ENCODE measurements at regions of chr12 and their contacts with region 1.

Region 1: DNA sequence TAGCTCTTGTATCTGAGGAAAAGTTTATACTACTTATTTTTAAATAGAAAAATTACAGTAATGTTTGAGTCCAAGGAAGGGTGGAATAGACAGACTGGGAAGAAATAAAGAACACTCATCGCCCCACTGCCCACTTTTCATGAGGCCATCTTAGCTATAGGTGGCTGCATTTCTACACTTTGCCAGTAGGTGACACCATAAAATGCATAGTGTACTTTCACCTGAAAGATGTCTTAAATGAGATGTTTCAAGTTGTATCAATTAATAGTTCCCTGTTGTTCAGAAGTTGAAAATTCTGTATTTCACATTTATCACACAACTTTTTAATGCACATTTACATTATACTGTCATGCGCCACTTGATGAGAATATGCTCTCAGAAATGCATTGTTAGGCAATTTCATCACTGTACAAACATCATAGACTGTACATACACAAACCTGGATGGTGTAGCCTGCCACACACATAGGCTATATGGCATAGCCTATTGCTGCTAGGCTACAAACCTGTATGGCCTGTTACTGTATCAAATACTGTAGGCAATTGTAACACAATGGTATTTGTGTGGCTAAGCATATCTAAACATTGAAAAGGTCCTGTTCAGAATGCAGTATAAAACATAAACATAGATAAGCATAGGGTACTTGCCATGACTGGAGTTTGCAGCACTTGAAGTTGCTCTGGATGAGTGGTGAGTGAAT is 27.6 kb downstream of the PMCH start:
- DNase-seq: no peak
- H3K4me3 Mint-ChIP-seq: no peak overlapping the region
- H3K27ac Mint-ChIP-seq: no peak overlapping the region
- H3K4me1 Mint-ChIP-seq: peaks cover 26% of the 10 kb centered on the region
- H3K27me3 Mint-ChIP-seq: no peaks in the 10 kb centered on the region

Region 2: DNA sequence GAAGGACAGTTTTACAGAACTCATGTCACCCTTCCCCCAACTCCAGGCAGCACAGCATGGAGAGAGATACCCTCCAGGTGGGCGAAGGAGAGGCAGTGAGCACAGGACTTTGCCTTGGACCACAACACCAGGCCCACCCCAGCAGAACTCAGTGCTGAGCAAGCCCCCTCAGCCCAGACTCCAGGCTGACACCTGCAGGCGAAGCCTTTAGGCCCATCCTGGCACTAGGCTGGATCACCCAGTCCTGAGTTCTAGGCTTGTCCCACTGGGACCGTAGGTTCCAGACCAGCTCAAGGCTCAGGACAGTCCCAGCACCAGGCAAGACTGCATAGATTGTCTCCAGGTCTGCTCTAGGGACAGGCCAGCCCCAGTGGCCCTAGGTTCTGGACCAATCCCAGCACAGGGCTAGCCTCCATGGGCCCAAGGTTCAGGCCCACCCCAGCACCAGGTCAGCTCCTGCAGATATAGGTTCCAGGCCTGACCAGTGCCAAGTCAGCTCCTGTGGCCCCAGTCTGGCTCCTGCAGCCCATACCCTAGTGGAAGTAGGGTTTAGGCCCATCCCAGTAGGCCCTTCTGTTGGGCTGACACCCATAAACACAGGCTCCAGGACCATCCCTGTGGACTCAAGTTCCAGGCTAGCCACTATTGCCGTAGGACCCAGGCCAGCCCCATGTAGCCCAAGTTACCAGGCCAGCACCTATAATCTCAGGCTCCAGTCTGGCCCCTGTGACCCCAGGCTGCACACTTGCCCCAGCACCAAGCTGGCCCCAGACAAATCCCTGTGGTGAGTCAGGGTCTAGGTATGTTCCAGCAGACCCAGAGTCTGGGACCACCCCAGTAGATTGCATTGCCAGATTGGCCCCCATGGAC is 117.6 kb before region 1 on chr12:
- intact Hi-C with region 1: no loop called
- DNase-seq: no peak
- H3K4me3 Mint-ChIP-seq: no peak overlapping the region
- H3K27ac Mint-ChIP-seq: no peak overlapping the region
- H3K4me1 Mint-ChIP-seq: peaks cover 30% of the 10 kb centered on the region
- H3K27me3 Mint-ChIP-seq: no peaks in the 10 kb centered on the region

Region 3: GRCh38 chr12:102119674-102120563 is 50.2 kb before region 1 on chr12 and contains the starts of genes NUP37 and PARPBP:
- intact Hi-C with region 1: loop called (anchors 2 kb)
- DNase-seq: peak; percentile 91
- H3K4me3 Mint-ChIP-seq: peak within 1 kb of the TSS; percentile 89
- H3K27ac Mint-ChIP-seq: peak within 1 kb of the TSS; percentile 77
- H3K4me1 Mint-ChIP-seq: peaks cover 36% of the 10 kb centered on the region
- H3K27me3 Mint-ChIP-seq: no peaks in the 10 kb centered on the region
- total RNA-seq, gene NUP37: 93.1 and 93.9 TPM in 2 replicates
- total RNA-seq, gene PARPBP: 27.0 and 27.4 TPM in 2 replicates

Region 4: DNA sequence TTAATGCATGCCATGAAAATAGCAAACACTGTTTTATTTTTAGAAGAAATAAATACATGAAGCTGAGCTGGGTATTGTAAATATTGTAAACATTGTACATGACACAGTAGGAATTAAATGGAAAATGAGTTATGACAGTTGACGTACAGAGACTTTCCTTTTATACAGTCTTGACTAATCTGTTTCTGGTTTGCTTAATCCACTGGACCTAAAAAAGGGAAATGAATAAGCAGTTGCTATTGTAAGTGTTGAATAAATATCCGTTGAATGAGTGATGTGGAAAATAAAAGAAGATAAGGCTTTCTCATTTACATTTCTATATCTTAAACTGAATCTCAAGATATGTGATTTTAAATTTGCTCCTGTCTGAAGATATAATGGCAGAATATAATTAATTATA is 12.6 kb after region 1 on chr12:
- intact Hi-C with region 1: loop called (anchors 2 kb)
- DNase-seq: no peak
- H3K4me3 Mint-ChIP-seq: no peak overlapping the region
- H3K27ac Mint-ChIP-seq: peak overlapping the region; percentile 73
- H3K4me1 Mint-ChIP-seq: peaks cover 11% of the 10 kb centered on the region
- H3K27me3 Mint-ChIP-seq: no peaks in the 10 kb centered on the region

Region 5: GRCh38 chr12:102300824-102301461 is 130.9 kb after region 1 on chr12:
- intact Hi-C with region 1: loop called (anchors 2 kb)
- DNase-seq: peak; percentile 12
- H3K4me3 Mint-ChIP-seq: no peak overlapping the region
- H3K27ac Mint-ChIP-seq: no peak overlapping the region
- H3K4me1 Mint-ChIP-seq: peaks cover 31% of the 10 kb centered on the region
- H3K27me3 Mint-ChIP-seq: peaks cover 18% of the 10 kb centered on the region